Activated CD8-positive, alpha-beta T cell treated with anti-CD3 and anti-CD28 coated beads for 36 hours (primary cell): ENCODE measurements at regions of chr6 and their contacts with region 1.

Region 1: GRCh38 chr6:42390228-42390934 is 61.3 kb downstream of the TRERF1 start:
- DNase-seq: peak; percentile 83
- ATAC-seq: peak; percentile 82
- H3K4me3 Mint-ChIP-seq: peak overlapping the region; percentile 73
- H3K27ac Mint-ChIP-seq: peak overlapping the region; percentile 96
- H3K4me1 Mint-ChIP-seq: peaks cover 95% of the 10 kb centered on the region
- H3K27me3 Mint-ChIP-seq: no peaks in the 10 kb centered on the region
- CTCF ChIP-seq: no peak

Region 2: GRCh38 chr6:42338663-42339218 is 51.6 kb before region 1 on chr6:
- CTCF ChIA-PET with region 1: interaction called, 9 read pairs
- POLR2A ChIA-PET with region 1: interaction called, 4 read pairs
- intact Hi-C with region 1: loop called (anchors 5 kb)
- DNase-seq: no peak
- ATAC-seq: no peak
- H3K4me3 Mint-ChIP-seq: no peak overlapping the region
- H3K27ac Mint-ChIP-seq: peak overlapping the region; percentile 82
- H3K4me1 Mint-ChIP-seq: peaks cover 59% of the 10 kb centered on the region
- H3K27me3 Mint-ChIP-seq: no peaks in the 10 kb centered on the region
- CTCF ChIP-seq: no peak

Region 3: DNA sequence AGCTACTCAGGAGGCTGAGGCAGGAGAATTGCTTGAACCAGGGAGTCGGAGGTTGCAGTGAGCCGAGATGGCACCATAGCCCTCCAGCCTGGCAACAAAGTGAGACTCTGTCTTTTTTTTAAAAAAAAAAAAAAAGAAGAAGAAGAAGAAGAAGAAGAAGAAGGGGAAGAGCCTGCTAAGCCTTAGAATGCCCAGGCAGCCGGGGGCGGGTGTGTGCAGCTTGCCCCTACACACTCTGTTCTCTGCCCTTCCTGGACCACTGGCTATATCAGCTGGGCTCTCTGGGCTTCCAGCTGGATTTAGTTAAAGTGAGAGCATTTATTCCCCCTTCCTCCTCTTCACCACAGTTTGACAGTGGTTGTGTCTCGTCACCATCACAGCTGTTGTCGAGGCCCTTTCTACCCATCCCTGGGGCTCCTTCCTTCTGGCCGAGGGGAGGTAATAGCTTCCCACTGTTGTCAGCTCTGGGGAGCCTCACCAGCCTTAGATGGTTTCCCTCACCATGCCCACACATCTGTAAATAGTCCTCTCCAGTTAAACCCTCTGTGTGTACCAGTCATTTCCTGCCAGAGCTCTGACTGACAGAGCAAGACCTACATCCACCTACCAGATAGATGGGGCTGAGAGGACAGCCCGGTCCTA is 16.2 kb before region 1 on chr6:
- CTCF ChIA-PET with region 1: interaction called, 23 read pairs
- POLR2A ChIA-PET with region 1: interaction called, 47 read pairs
- intact Hi-C with region 1: no loop called
- DNase-seq: peak; percentile 47
- ATAC-seq: peak; percentile 82
- H3K4me3 Mint-ChIP-seq: no peak overlapping the region
- H3K27ac Mint-ChIP-seq: peak overlapping the region; percentile 75
- H3K4me1 Mint-ChIP-seq: peaks cover 60% of the 10 kb centered on the region
- H3K27me3 Mint-ChIP-seq: no peaks in the 10 kb centered on the region
- CTCF ChIP-seq: no peak

Region 4: DNA sequence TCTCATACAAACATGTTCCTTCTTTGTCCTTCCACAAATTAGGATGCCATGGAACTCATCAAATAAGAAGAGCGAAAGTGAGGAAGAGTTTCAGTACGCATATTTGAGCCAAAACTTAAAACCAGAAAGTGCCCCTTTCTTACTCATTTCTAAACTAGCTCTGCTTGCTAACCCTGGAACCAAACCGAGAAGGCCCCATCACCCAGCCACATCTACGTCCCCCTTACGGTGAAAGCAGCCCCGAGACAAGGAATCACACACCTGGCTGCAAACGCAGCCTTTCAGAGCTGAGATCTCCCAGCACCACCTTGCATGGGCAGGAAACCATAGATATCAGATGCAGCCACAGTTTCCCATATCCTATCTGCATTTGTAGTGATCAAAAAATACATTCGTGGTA is 32.9 kb after region 1 on chr6:
- CTCF ChIA-PET with region 1: interaction called, 14 read pairs
- POLR2A ChIA-PET with region 1: interaction called, 4 read pairs
- intact Hi-C with region 1: no loop called
- DNase-seq: peak; percentile 81
- ATAC-seq: peak; percentile 76
- H3K4me3 Mint-ChIP-seq: no peak overlapping the region
- H3K27ac Mint-ChIP-seq: no peak overlapping the region
- H3K4me1 Mint-ChIP-seq: peaks cover 63% of the 10 kb centered on the region
- H3K27me3 Mint-ChIP-seq: no peaks in the 10 kb centered on the region
- CTCF ChIP-seq: no peak

Region 5: DNA sequence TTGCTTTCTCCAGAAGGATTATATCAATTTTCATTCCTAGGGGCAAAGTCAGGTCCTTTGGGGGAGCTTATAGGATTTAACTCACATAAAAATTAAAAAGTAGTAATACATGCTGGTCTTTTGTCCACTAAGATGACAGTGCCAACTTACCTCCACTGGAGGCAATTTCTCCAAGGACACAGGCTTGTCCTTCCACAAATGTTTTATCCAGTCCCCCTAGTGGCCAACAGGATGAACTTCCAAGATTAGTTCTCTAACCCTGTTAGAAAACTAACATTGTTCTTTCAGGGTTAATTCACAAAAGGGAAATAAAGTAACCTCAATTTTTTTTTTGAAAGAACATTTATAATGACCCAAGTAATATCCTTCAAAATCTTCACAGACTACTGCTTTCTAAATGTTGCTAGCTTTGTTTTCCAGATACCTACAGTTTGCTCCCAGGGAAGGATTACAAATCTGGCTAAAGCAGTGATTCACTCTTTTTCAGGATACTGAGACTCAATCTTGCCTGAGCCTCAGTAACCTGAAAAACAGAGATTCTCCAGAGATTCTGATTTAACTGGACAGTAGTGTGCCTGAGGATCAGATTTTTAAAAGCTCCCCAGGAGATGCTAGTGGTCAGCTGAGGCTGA is 141.8 kb after region 1 on chr6:
- CTCF ChIA-PET with region 1: interaction called, 21 read pairs
- POLR2A ChIA-PET with region 1: no interaction called
- intact Hi-C with region 1: no loop called
- DNase-seq: peak; percentile 25
- ATAC-seq: peak; percentile 75
- H3K4me3 Mint-ChIP-seq: no peak overlapping the region
- H3K27ac Mint-ChIP-seq: no peak overlapping the region
- H3K4me1 Mint-ChIP-seq: peaks cover 2% of the 10 kb centered on the region
- H3K27me3 Mint-ChIP-seq: no peaks in the 10 kb centered on the region
- CTCF ChIP-seq: peak; percentile 96